ENCODE measurements at regions of chr7 and their contacts with region 1.

Region 1: GRCh38 chr7:37732253-37732652 is 48.7 kb downstream of the GPR141 start:
- DNase-seq: peak; percentile 21 to 80
- H3K4me3 ChIP-seq: no peak overlapping the region
- H3K27ac ChIP-seq: no peak overlapping the region
- H3K4me1 ChIP-seq: no peaks in the 10 kb centered on the region
- H3K27me3 ChIP-seq: no peaks in the 10 kb centered on the region
- CTCF ChIP-seq: peak; percentile 61 to 87 (median 83)
- EP300 ChIP-seq: no peak
- POLR2A ChIP-seq: no peak
- RAD21 ChIP-seq: peak; percentile 87 to 92

Region 2: DNA sequence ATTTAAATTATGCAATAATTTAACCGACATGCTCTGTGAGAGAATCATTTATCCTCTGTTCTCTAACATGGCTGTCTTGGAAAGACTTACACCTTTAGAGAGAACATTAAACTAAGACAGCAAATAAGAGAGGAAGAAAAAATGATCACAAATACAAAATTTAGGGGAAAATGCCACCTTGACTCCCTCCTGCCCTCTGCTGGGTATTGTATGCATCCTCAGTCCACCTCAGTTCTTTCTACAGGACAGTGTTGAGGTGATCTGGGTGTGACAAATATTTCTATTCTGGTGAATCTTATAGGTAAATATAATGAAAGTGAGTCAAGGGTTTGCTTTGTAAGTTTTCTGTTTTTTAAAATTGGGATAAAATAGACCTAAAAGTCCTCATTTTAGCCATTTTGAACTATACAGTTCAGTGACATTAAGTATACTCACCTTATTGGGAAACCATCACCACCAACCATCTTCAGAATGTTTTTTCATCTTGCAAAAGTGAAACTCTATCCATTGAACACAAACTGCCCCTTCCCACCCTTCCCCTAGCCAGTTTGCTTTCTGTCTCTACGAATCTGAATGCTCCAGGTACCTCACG is 222.1 kb before region 1 on chr7:
- CTCF ChIA-PET with region 1: interaction called, 15 read pairs
- POLR2A ChIA-PET with region 1: no interaction called
- DNase-seq: no peak
- H3K4me3 ChIP-seq: no peak overlapping the region
- H3K27ac ChIP-seq: no peak overlapping the region
- H3K4me1 ChIP-seq: no peaks in the 10 kb centered on the region; a peak in 1 of 7 replicates
- H3K27me3 ChIP-seq: no peaks in the 10 kb centered on the region
- CTCF ChIP-seq: peak; percentile 36 to 77 (median 66)
- EP300 ChIP-seq: no peak
- POLR2A ChIP-seq: no peak
- RAD21 ChIP-seq: peak; percentile 74 to 77

Region 3: DNA sequence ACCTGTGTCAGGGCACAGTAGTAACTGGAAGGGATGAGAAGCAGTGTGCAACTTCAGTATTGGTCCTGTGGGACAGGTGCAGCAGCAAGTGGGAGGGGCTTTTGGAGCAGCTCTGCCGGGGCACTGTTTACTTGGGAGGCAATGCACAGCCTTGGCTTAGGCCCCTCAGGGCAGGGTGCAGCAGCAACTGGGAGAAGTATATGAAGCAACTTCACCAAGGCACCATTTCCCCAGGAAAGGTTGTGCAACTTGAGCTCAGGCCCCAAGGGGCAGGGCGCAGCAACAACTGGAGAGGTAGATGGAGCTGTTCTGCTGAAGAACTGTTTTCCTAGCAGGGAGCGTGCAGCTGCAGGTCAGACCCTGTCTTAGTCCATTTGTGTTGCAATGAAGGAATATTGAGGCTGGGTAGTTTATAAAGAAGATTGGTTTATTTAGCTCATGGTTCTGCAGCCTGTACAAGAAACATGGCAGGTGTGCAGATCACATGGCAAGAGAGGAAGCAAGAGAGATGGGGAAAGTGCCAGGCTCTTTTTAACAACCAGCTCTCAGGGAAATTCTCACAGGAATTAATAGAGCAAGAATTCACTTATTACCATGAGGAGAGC is 38.0 kb before region 1 on chr7:
- CTCF ChIA-PET with region 1: interaction called, 16 read pairs
- POLR2A ChIA-PET with region 1: no interaction called
- DNase-seq: no peak
- H3K4me3 ChIP-seq: no peak overlapping the region
- H3K27ac ChIP-seq: no peak overlapping the region
- H3K4me1 ChIP-seq: peaks cover 0 to 10% (median 6%) of the 10 kb centered on the region in 4 experiments; a peak in 5 of 7 replicates
- H3K27me3 ChIP-seq: no peaks in the 10 kb centered on the region
- CTCF ChIP-seq: peak in 2 of 3 experiments; percentile 10 to 14; a peak in 2 of 4 replicates
- EP300 ChIP-seq: no peak
- POLR2A ChIP-seq: no peak
- RAD21 ChIP-seq: peak; percentile 2 to 22; a peak in 1 of 4 replicates

Region 4: DNA sequence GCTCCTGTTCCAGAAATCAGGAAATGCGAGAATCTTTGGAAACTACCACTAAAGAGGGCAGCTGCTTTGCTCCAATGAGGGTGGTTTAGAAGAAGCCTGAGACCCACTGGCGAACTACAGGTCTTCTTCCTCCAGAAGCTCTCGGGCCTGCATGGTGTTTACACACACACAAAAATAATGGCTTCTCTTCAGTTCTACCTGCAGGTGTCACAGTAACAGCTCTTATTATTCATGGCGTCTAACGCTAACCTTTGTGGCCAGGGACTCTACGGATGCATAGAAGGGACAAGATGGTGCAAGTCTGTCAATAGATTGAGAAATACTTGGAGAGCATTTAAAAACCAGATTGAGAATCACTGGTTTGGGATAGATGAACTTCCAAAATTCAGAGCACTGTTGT is 26.3 kb before region 1 on chr7:
- CTCF ChIA-PET with region 1: interaction called, 11 read pairs
- POLR2A ChIA-PET with region 1: no interaction called
- DNase-seq: no peak
- H3K4me3 ChIP-seq: no peak overlapping the region
- H3K27ac ChIP-seq: no peak overlapping the region
- H3K4me1 ChIP-seq: peaks cover 0 to 10% (median 7%) of the 10 kb centered on the region in 4 experiments; a peak in 4 of 7 replicates
- H3K27me3 ChIP-seq: no peaks in the 10 kb centered on the region
- CTCF ChIP-seq: no peak
- EP300 ChIP-seq: no peak
- POLR2A ChIP-seq: no peak
- RAD21 ChIP-seq: no peak

Region 5: DNA sequence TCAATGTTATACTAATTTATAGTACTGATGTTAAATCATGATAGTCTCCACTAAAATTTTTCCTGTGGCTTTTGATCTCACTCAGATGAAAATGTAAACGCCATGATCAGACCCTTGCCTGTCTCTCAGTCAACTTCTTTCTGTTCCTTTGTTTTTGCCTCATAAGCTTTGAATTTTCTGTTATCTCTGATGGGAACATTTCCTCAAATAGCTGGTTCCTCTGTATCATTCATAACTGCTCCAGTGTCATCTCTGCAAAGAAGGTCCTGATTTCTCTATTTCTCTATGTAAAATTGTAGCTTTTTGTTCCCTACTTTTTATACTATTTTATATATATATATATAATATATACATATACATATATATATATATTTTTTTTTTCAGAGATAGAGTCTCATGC is 18.8 kb after region 1 on chr7:
- CTCF ChIA-PET with region 1: interaction called, 13 read pairs
- POLR2A ChIA-PET with region 1: no interaction called
- DNase-seq: no peak
- H3K4me3 ChIP-seq: no peak overlapping the region
- H3K27ac ChIP-seq: no peak overlapping the region
- H3K4me1 ChIP-seq: no peaks in the 10 kb centered on the region
- H3K27me3 ChIP-seq: no peaks in the 10 kb centered on the region; a peak in 1 of 7 replicates
- CTCF ChIP-seq: no peak
- EP300 ChIP-seq: no peak
- POLR2A ChIP-seq: no peak
- RAD21 ChIP-seq: no peak

Measured in H1 (cell line).